CD14-positive monocyte (primary cell): ENCODE measurements at regions of chr17 and their contacts with region 1.

Region 1: DNA sequence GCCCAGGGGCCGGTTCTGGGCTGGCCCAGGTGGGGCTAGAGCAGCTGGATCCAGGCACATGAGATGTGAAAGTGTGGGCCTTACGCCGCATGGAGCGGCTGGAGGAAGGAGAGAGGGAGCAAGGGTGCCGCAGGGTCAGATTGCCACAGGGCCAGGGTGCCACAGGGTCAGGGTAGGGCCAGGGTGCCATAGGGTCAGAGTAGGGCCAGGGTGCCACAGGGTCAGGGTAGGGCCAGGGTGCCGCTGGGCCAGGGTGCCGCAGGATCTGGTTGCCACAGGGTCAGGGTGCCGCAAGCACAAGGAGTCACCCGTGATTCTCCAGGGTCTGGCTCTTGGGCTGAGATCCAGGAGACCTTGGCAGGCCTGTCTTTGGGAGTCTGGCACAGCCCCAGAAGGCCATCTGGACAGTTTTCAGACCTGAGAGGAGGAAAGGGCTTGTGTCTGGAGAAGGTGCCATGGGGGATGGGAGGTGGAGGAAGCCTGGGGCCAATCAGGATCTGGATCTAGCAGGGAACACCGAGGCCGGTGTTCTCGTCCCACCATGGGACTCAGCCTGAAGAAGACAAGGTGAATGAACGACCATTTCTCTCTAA is 13.1 kb upstream of the LASP1NB start:
- DNase-seq: no peak
- H3K4me3 ChIP-seq: no peak overlapping the region
- H3K4me3 Mint-ChIP-seq: no peak overlapping the region
- H3K27ac ChIP-seq: peak overlapping the region in 1 of 2 donors; percentile 45
- H3K27ac Mint-ChIP-seq: peak overlapping the region in 3 of 7 donors; percentile 58 to 72 (median 66)
- H3K4me1 ChIP-seq: peaks cover 0 to under 1% of the 10 kb centered on the region in 2 donors
- H3K4me1 Mint-ChIP-seq: peaks cover 2% of the 10 kb centered on the region
- H3K27me3 ChIP-seq: no peaks in the 10 kb centered on the region
- H3K27me3 Mint-ChIP-seq: peaks cover 0 to 4% (median 0%) of the 10 kb centered on the region in 3 donors
- CTCF ChIP-seq: no peak

Region 2: GRCh38 chr17:38960402-38960801 is 48.1 kb after region 1 on chr17:
- intact Hi-C with region 1: loop called in 1 of 2 experiments (anchors 5 kb)
- DNase-seq: no peak
- H3K4me3 ChIP-seq: no peak overlapping the region
- H3K4me3 Mint-ChIP-seq: no peak overlapping the region
- H3K27ac ChIP-seq: no peak overlapping the region
- H3K27ac Mint-ChIP-seq: no peak overlapping the region
- H3K4me1 ChIP-seq: no peaks in the 10 kb centered on the region
- H3K4me1 Mint-ChIP-seq: no peaks in the 10 kb centered on the region
- H3K27me3 ChIP-seq: no peaks in the 10 kb centered on the region
- H3K27me3 Mint-ChIP-seq: peaks cover under 1 to 8% (median 7%) of the 10 kb centered on the region in 3 donors
- CTCF ChIP-seq: no peak